PC-3 (cell line): ENCODE measurements at regions of chr12 and their contacts with region 1.

Region 1: GRCh38 chr12:113462117-113462774 is 9.4 kb downstream of the LHX5 start:
- DNase-seq: peak; percentile 91
- ATAC-seq: peak; percentile 89
- H3K4me3 ChIP-seq: 0 out of 2 replicates have a peak overlapping the region, but pooled peaks have one; percentile 29
- H3K27ac ChIP-seq: no peak overlapping the region
- H3K4me1 ChIP-seq: peaks cover 5% of the 10 kb centered on the region; the same call in 1 of the 2 replicates
- H3K27me3 ChIP-seq: peaks cover 45% of the 10 kb centered on the region
- CTCF ChIP-seq: peak; percentile 92

Region 2: GRCh38 chr12:113439606-113440030 is 22.6 kb before region 1 on chr12:
- CTCF ChIA-PET with region 1: no interaction called
- POLR2A ChIA-PET with region 1: no interaction called
- intact Hi-C with region 1: no loop called
- DNase-seq: peak; percentile 69
- ATAC-seq: peak; percentile 73
- H3K4me3 ChIP-seq: no peak overlapping the region
- H3K27ac ChIP-seq: no peak overlapping the region
- H3K4me1 ChIP-seq: no peaks in the 10 kb centered on the region
- H3K27me3 ChIP-seq: no peaks in the 10 kb centered on the region
- CTCF ChIP-seq: peak; percentile 85

Region 3: DNA sequence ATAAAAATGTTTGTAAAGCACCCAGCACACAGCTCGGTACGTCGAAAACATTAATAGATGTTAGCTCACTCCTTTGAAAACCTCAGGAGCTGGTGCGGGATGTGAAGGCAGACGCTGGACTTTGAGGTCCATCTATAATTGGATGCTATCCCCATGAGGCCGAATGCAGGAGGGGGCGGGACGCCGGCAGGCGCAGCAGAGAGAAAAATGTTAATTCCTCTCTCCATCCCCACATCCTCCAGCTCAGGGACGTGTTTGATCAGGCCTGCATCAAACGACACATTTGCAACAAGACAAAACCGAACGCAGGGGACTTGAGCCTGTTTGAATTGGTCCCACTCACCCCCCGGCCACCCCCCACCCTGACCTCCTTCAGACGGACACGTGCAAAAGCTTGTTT is 272.9 kb after region 1 on chr12:
- CTCF ChIA-PET with region 1: no interaction called
- POLR2A ChIA-PET with region 1: no interaction called
- intact Hi-C with region 1: loop called (anchors 5 kb)
- DNase-seq: no peak
- ATAC-seq: no peak
- H3K4me3 ChIP-seq: no peak overlapping the region
- H3K27ac ChIP-seq: no peak overlapping the region
- H3K4me1 ChIP-seq: no peaks in the 10 kb centered on the region
- H3K27me3 ChIP-seq: no peaks in the 10 kb centered on the region
- CTCF ChIP-seq: no peak

Region 4: DNA sequence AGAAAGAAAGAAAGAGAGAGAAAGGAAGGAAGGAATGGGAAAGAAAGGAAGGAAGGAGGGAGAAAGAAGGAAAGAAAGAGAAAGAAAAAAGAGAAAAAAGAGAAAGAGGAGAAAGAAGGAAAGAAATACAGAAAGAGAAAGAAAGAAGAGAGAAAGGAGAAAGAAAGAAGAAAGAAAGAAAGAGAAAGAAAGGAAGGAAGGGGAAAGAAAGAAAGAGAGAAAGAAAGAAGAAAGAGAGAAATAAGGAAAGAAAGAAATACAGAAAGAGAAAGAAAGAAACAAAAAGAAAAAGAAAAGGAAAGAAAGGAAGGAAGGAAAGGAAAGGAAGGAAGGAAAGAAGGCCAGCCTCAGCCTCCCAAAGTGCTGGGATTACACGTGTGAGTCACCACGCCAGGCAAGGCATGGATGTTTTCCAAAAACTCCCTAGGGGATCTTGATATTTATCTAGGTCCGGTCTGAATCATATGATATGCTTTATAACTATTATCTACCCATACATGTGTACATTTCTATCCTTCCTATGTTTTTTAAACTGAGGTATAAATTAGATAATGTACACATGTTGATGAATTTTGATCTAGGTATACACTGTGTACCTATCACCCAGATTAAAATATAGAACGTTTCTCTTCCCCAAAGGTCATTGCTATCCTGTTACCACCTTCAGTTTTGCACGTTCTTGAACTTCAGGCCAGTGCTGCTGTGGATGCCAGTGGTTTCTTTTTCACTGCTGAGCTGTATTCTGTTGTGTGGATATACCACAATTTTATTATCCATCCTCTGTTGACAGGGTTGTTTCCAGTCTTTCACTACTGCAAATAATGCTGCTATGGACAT is 326.0 kb after region 1 on chr12:
- CTCF ChIA-PET with region 1: no interaction called
- POLR2A ChIA-PET with region 1: no interaction called
- intact Hi-C with region 1: loop called (anchors 10 kb)
- DNase-seq: peak; percentile 96
- ATAC-seq: peak; percentile 74
- H3K4me3 ChIP-seq: no peak overlapping the region
- H3K27ac ChIP-seq: peak overlapping the region; percentile 23
- H3K4me1 ChIP-seq: peaks cover 30% of the 10 kb centered on the region
- H3K27me3 ChIP-seq: no peaks in the 10 kb centered on the region
- CTCF ChIP-seq: no peak

Region 5: DNA sequence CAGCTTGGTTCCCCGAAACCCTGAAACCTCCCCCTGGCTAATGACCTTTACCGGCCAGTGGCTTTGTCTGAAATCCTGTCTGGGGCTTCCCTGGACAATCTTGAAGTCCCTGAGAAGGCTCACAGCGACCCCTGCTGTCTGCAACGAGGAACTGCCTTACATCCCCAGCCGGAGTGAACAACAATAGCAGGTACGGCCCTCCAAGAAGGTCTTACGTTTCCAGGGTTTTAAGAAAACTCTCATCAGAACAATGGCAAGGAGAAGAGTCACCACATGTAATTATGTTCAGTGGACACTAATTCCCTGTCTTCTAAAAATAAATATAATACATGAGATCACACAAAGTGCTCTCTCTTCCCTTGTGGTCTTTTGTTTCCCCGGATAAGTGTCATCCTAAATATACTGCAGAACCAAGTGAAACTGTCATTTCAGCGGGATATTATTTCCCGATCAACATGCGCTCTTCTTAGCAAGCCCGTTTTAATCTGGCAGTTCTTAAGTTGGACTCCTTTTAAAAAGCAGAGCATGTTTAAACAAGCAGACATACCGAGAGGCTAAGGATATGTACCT is 450.6 kb after region 1 on chr12:
- CTCF ChIA-PET with region 1: interaction called, 6 read pairs
- POLR2A ChIA-PET with region 1: no interaction called
- intact Hi-C with region 1: loop called (anchors 1 kb)
- DNase-seq: peak; percentile 83
- ATAC-seq: peak; percentile 89
- H3K4me3 ChIP-seq: no peak overlapping the region
- H3K27ac ChIP-seq: no peak overlapping the region
- H3K4me1 ChIP-seq: no peaks in the 10 kb centered on the region
- H3K27me3 ChIP-seq: no peaks in the 10 kb centered on the region
- CTCF ChIP-seq: peak; percentile 98